ENCODE measurements at regions of chr7 and their contacts with region 1.

Region 1: DNA sequence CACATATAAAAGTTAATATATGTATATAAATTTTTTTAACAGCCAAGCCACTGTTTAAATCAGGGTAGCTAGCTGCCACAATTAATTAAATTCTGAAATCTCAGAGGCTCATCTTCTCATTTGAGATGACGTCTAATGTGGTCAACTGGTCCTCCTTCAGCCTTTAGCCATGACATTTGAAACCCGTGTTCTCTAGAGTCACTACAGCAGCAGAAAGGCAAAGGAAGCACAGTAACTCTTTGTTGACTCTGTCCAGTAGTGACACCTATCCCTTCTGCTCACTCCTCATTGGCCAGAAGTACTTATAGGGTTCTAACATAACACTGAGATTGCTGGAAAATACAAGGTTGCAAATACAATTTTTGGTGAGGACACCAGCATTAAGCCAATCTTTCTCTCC is 555.5 kb downstream of the ETV1 start:
- DNase-seq: no peak
- H3K4me3 ChIP-seq: no peak overlapping the region
- H3K27ac ChIP-seq: no peak overlapping the region
- H3K4me1 ChIP-seq: no peaks in the 10 kb centered on the region
- H3K27me3 ChIP-seq: no peaks in the 10 kb centered on the region
- CTCF ChIP-seq: no peak

Region 2: GRCh38 chr7:13724977-13725566 is 291.1 kb after region 1 on chr7:
- CTCF ChIA-PET with region 1: no interaction called
- POLR2A ChIA-PET with region 1: no interaction called
- intact Hi-C with region 1: no loop called
- DNase-seq: no peak
- H3K4me3 ChIP-seq: no peak overlapping the region
- H3K27ac ChIP-seq: no peak overlapping the region
- H3K4me1 ChIP-seq: no peaks in the 10 kb centered on the region
- H3K27me3 ChIP-seq: no peaks in the 10 kb centered on the region
- CTCF ChIP-seq: no peak

Region 3: DNA sequence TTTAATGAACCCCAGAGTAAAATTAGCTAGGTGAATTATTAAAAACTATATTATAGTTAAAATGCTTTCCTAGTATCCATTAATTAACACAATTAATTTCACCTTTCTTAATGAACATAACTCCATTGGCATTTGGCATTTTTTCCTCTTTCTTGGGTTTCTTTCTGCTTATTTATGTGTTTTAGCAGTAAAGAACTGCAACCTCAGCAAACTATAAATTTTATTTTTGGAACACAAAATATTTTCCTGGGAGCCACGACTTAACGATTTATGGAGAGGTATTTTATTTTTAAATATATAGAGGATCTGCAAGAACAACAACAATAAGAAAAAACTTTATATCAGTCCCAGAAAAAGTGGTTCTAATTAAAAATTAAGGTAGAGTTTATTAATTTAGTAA is 1002.9 kb after region 1 on chr7:
- CTCF ChIA-PET with region 1: no interaction called
- POLR2A ChIA-PET with region 1: interaction called, 11 read pairs
- intact Hi-C with region 1: no loop called
- DNase-seq: no peak
- H3K4me3 ChIP-seq: no peak overlapping the region
- H3K27ac ChIP-seq: no peak overlapping the region
- H3K4me1 ChIP-seq: no peaks in the 10 kb centered on the region
- H3K27me3 ChIP-seq: no peaks in the 10 kb centered on the region
- CTCF ChIP-seq: no peak